Posterior vena cava (tissue), 2 donors: ENCODE measurements at regions of chr17 and their contacts with region 1.

Region 1: DNA sequence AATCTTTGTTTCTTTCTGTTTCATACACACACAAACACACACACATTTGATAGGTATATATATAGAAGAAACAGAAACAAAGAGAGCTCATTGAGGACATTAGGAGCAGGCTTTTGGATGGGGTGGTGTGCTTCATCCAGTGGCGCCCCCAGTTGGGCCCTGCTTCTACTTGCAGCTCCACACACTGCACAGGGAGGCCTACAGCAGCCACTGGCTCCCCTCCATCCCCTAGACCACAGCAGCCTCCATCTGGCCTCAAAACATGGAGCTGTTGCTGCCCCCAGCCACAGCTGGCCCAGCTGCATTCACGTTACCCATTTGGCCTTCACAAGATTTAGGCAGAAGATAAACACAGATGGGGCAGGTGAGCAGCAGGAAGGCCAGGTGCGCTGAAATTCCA is 33.1 kb upstream of the NF1 start:
- DNase-seq: no peak

Region 2: DNA sequence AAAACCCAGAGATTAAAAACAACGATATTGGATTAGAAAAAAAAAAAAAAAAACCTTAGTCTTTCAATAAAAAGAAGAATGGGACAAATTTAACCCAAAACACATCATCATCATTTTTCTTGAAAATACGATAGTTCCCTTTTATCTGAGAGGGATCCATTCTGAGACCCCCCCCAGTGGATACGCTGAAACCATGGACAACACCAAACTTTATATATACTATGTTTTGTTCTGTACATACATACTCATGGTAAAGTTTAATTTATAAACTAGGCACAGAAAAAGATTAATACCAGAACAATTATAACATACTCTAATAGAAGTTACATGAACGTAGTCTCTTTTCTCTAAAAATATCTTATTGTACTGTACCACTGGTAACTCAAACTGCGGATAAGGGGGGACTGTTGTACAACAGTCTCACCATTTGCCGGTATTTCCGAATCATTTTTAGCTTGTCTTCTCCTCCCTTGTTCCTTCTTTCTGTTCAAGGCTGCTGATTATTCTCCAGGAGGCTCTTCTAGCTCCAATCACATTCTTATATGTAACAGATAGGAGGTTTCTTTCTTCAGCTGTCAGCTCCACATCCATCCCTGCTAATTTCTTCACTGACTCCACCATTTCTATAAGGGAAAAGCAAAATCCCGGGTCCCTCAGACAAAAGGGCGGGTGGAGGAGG is 53.8 kb before region 1 on chr17:
- intact Hi-C with region 1: loop called in 1 of 2 experiments (anchors 2 kb)
- DNase-seq: no peak

Region 3: GRCh38 chr17:31216053-31216751 is 154.5 kb after region 1 on chr17:
- intact Hi-C with region 1: no loop called
- DNase-seq: no peak